ENCODE measurements at regions of chr20 and their contacts with region 1.

Region 1: GRCh38 chr20:53216856-53217576 is 244.9 kb downstream of the TSHZ2 start:
- DNase-seq: peak; percentile 70 to 86 (median 82)
- H3K4me3 ChIP-seq: no peak overlapping the region
- H3K27ac ChIP-seq: no peak overlapping the region
- H3K4me1 ChIP-seq: no peaks in the 10 kb centered on the region
- H3K27me3 ChIP-seq: no peaks in the 10 kb centered on the region
- CTCF ChIP-seq: peak; percentile 46 to 80 (median 80)
- EP300 ChIP-seq: no peak
- POLR2A ChIP-seq: no peak

Region 2: DNA sequence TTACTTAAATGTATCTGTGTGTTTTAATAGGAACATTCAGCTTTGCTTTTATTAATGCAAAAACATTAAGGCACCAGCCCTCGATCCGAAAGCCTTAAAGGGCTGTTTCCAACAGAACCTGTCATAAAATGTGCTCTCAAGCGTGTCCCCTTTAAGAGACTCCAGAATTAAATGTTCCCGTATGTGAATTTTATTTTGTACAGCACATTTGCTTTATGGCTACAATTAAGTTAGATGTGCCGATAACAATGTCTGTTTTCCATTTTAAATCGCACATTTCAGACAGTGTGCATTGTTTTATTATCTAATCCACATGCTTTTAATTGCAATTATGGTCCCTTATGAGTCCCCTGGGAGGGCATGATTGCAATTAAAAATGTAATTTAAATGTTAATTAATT is 46.0 kb before region 1 on chr20:
- intact Hi-C with region 1: no loop called
- DNase-seq: no peak
- H3K4me3 ChIP-seq: no peak overlapping the region
- H3K27ac ChIP-seq: no peak overlapping the region
- H3K4me1 ChIP-seq: peaks cover 2% of the 10 kb centered on the region
- H3K27me3 ChIP-seq: no peaks in the 10 kb centered on the region
- CTCF ChIP-seq: no peak
- EP300 ChIP-seq: no peak
- POLR2A ChIP-seq: no peak

Region 3: DNA sequence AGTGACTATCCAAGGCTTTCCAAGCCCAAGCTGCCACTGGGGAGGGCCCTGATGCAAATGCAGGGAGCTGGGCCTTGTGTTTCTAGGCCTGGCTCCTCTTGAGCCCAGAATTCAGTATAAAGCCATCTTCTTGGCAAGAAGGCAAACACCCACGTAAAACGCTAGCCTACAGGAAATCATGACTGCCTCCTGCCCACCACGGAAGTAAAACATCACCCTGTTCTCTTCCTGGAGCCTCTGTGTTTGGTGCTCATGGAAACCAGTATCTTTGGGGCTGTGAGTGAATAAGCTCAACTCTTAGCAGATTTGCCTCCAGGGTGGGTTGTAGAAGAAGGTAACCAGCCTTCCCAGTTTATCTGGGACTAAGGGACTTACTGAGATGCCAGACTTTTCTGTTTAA is 105.6 kb after region 1 on chr20:
- intact Hi-C with region 1: no loop called
- DNase-seq: no peak
- H3K4me3 ChIP-seq: no peak overlapping the region
- H3K27ac ChIP-seq: no peak overlapping the region
- H3K4me1 ChIP-seq: no peaks in the 10 kb centered on the region
- H3K27me3 ChIP-seq: no peaks in the 10 kb centered on the region
- CTCF ChIP-seq: no peak
- EP300 ChIP-seq: no peak
- POLR2A ChIP-seq: no peak

Region 4: GRCh38 chr20:53547664-53548239 is 330.7 kb after region 1 on chr20:
- intact Hi-C with region 1: loop called in 1 of 4 experiments (anchors 10 kb)
- DNase-seq: peak in 4 of 5 donors; percentile 26 to 57 (median 32)
- H3K4me3 ChIP-seq: no peak overlapping the region
- H3K27ac ChIP-seq: no peak overlapping the region
- H3K4me1 ChIP-seq: peaks cover 2% of the 10 kb centered on the region
- H3K27me3 ChIP-seq: no peaks in the 10 kb centered on the region
- CTCF ChIP-seq: peak; percentile 56 to 78 (median 66)
- EP300 ChIP-seq: no peak
- POLR2A ChIP-seq: no peak